Right ventricle myocardium inferior (tissue), 1 donor: ENCODE measurements at regions of chr5 and their contacts with region 1.

Region 1: GRCh38 chr5:168706655-168707069 is 127.5 kb upstream of the PANK3 start:
- DNase-seq: no peak
- ATAC-seq: peak; percentile 52

Region 2: DNA sequence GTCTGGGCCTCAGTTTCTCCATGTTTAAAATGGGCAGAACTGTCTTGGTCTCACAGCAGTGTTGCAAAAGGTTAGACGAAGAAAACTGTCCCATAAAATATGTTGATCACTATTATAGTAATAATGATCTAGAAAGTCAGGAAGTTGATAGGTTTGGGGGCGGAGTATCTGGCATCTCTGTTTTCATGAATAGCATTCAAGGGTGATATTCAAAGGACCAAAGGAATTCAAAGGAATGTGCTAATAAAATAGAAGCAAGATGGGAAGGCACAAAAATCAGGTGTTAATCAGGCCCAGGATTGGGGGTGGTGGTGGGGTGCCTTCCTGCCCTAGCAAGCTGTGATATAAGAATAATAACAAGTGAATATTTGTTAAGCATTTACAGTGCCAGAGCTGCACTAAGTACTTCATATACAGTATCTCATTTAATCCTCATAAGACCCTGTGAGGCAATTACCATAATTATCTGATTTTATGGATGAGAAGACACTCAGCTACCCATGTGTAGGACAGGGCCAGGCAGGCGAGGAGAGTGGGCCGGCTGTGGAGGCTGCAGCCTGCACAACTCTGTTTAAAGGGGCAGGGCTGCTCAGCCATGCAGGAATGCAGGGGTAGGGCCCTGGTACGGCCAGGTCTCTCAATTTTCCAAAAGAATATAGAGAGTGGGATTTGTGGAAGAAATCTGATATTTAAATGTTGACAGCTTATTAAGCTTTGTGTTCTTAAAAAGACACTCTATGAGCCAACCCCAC is 14.5 kb after region 1 on chr5:
- intact Hi-C with region 1: no loop called
- DNase-seq: no peak
- ATAC-seq: no peak

Region 3: GRCh38 chr5:168879929-168880328 is 173.3 kb after region 1 on chr5:
- intact Hi-C with region 1: loop called (anchors 10 kb)
- DNase-seq: no peak
- ATAC-seq: peak; percentile 62

Region 4: DNA sequence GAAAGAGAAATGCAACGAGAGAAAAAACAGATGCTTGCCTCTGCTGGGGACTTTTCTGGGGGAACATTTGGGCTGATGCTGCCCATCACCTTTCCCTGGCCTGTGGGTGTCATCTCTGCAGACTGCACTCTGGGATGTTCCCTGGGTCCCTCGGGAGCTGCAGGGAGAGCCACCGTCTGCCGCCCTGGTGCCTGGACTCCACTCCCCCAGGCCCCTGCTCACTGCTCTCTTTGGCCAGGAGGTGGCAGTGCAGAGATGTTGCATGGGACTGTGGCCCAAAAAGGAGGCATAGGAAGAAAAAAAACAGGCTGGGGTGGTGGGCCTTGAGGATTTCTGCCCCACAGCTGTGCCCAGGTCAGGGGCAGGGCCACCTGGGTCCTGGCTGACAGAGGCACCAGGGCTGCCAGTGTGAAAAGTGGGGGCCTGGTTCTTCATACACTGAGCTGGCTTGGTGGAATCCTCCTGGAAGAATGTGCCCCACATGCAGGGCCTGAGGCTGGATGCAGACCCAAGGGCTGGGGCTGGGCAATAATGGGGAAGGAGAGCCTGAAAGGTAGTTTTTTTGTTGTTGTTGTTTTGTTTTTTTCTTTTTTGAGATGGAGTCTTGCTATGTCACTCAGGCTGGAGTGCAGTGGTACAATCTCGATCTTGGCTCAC is 240.7 kb after region 1 on chr5:
- intact Hi-C with region 1: loop called (anchors 5 kb)
- DNase-seq: no peak
- ATAC-seq: no peak